OCI-LY7 (cell line): ENCODE measurements at regions of chr11 and their contacts with region 1.

Region 1: DNA sequence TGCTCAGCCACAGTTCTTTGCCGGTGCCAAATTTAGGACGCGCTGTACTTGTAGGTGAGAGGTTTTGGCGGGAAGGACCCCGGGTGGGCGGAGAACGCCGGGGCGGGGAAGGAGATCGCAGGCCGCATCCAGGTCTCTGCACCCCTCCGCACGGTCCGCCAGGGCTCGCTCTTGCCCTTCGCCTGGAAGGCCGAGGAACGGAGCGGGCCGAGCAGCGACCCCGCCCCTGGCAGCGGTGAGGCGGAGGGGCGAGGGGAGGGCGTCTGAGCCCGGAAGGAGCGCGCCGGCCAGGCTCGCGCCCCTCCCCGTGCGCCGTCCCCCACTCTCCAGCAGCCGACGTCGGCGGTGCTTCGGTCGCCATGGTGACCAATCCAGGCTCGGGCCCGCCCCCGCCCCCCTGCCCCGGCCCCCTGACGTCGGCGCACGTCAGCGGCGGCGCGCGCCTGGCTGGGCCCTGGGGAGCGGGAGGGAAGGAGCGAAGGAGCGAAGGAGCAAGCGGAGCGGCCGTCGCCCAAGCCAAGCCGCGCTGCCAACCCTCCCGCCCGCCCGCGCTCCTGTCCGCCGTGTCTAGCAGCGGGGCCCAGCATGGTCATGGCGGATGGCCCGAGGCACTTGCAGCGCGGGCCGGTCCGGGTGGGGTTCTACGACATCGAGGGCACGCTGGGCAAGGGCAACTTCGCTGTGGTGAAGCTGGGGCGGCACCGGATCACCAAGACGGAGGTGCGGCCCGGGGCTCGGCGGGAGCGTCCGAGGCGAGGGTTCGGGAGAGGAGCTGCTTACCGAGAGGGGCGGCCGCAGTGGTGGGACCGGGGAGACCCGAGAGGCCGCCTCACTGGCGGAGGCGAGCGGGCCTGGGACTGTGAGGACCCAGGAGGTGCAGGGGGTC is at the start of gene SIK2:
- DNase-seq: peak; percentile 97
- H3K4me3 ChIP-seq: peak within 1 kb of the TSS; percentile 96
- H3K27ac ChIP-seq: peak within 1 kb of the TSS; percentile 72
- H3K4me1 ChIP-seq: peaks cover 30% of the 10 kb centered on the region
- CTCF ChIP-seq: peak; percentile 80
- total RNA-seq, gene SIK2: 8.5 and 9.8 TPM in 2 replicates

Region 2: DNA sequence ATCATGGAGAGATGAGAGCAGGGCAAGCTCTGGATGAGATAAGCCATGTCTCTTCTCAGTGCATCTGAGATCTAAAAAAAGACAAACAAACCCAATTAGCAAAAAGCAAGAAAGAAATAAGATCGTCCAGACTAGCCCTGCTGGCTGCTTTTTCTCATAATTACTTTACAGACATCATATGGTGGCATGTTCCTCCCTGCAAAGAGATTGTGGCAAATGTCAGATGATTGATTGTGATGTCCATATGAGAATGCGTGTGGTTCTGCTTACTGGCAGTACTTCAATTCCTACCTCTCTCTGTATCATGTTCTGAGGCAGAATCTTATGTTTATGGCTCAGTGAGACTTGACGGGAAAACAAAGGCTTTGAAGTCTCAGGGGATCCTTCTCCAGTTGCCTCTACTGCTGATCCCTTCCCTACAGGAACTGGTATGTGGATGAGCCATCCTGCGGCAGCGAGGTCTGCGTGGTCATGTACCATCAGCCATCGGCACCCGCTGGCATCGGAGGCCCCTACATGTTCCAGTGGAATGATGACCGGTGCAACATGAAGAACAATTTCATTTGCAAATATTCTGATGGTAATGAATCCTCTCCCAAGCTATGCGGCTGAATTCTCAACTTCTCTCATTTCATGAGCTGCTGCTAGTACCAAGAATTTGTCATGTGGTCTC is 52.9 kb before region 1 on chr11:
- CTCF ChIA-PET with region 1: no interaction called
- POLR2A ChIA-PET with region 1: no interaction called
- intact Hi-C with region 1: no loop called
- DNase-seq: no peak
- H3K4me3 ChIP-seq: no peak overlapping the region
- H3K27ac ChIP-seq: no peak overlapping the region
- H3K4me1 ChIP-seq: peaks cover 11% of the 10 kb centered on the region
- CTCF ChIP-seq: no peak

Region 3: GRCh38 chr11:111565114-111565720 is 37.0 kb before region 1 on chr11:
- CTCF ChIA-PET with region 1: no interaction called
- POLR2A ChIA-PET with region 1: interaction called, 4 read pairs
- intact Hi-C with region 1: loop called (anchors 2 kb)
- DNase-seq: peak; percentile 83
- H3K4me3 ChIP-seq: no peak overlapping the region
- H3K27ac ChIP-seq: no peak overlapping the region
- H3K4me1 ChIP-seq: no peaks in the 10 kb centered on the region
- CTCF ChIP-seq: peak; percentile 93

Region 4: DNA sequence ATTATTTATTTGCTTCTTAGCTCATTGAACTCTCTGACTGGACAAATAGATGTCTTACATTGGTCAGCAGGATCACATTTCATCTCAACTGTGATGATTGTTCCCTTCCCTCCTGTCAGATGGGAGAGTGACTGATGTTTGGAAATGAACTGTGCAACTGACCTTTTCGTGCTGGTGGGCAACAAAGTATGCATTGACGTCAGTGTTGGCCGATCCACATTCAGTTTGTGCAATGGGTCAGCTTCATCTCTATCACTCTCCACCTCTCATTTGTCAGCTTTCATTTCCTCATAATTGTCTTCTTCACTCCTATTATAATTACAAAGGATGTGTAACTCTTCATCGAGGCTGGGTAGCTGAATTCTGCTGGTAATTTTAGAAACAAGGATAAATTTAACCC is 92.6 kb after region 1 on chr11:
- CTCF ChIA-PET with region 1: interaction called, 6 read pairs
- POLR2A ChIA-PET with region 1: interaction called, 6 read pairs
- intact Hi-C with region 1: loop called (anchors 2 kb)
- DNase-seq: peak; percentile 58
- H3K4me3 ChIP-seq: peak overlapping the region; percentile 33
- H3K27ac ChIP-seq: peak overlapping the region; percentile 94
- H3K4me1 ChIP-seq: peaks cover 68% of the 10 kb centered on the region
- CTCF ChIP-seq: no peak

Region 5: GRCh38 chr11:111766093-111766833 is 164.0 kb after region 1 on chr11 and contains the start of gene PPP2R1B:
- CTCF ChIA-PET with region 1: interaction called, 5 read pairs
- POLR2A ChIA-PET with region 1: interaction called, 7 read pairs
- intact Hi-C with region 1: loop called (anchors 1 kb)
- DNase-seq: peak; percentile 74
- H3K4me3 ChIP-seq: peak within 1 kb of the TSS; percentile 88
- H3K27ac ChIP-seq: peak within 1 kb of the TSS; percentile 35
- H3K4me1 ChIP-seq: peaks cover 17% of the 10 kb centered on the region
- CTCF ChIP-seq: no peak
- total RNA-seq, gene PPP2R1B: 30.2 and 50.6 TPM in 2 replicates

Region 6: GRCh38 chr11:111841370-111842053 is 239.3 kb after region 1 on chr11:
- CTCF ChIA-PET with region 1: no interaction called
- POLR2A ChIA-PET with region 1: interaction called, 4 read pairs
- intact Hi-C with region 1: loop called (anchors 1 kb)
- DNase-seq: peak; percentile 85
- H3K4me3 ChIP-seq: no peak overlapping the region
- H3K27ac ChIP-seq: no peak overlapping the region
- H3K4me1 ChIP-seq: no peaks in the 10 kb centered on the region
- CTCF ChIP-seq: peak; percentile 98

Region 7: DNA sequence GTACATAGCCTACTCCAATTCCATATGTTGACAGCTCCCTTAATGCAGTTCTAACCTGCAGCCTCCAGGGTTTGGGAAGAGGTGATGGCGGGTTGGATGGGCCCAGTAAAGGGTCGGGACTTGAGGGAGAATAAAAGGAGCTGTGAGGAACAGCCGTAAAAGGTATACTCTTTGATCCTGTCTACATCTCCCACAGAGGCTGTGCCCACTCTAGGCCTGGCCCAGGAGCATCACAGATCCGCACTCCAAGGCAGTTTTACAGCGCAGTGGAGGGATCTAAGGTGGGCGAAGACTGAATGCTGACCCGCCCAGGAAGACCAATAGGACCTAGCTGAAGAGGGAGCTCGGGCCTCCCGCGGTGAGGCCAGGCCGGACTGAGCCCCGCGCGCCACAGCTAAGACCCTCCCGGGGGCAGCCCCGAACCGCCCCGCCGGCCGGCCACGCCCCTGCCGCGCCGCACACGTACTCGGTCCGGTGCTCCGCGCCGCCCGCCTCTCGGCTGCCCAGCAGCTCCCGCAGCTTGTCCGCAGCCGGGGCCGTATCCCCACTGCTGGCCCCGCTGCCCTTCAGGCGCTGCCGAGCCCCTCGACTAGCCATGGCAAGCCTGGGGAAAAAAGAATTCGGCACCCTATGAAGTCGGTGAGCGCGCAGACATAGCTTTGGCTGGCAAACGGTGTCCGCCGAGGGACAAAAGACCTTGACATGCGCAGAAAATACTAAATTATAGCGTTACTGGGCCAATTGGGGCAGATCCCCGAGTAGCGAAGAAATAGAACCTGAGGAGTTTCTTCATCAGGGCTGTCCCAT is 268.9 kb after region 1 on chr11 and contains the start of gene ALG9:
- CTCF ChIA-PET with region 1: no interaction called
- POLR2A ChIA-PET with region 1: interaction called, 3 read pairs
- intact Hi-C with region 1: loop called (anchors 5 kb)
- DNase-seq: peak; percentile 79
- H3K4me3 ChIP-seq: peak within 1 kb of the TSS; percentile 79
- H3K27ac ChIP-seq: peak within 1 kb of the TSS; percentile 12
- H3K4me1 ChIP-seq: peaks cover 16% of the 10 kb centered on the region
- CTCF ChIP-seq: peak; percentile 43; the same call in 1 of the 2 replicates
- total RNA-seq, gene ALG9: 13.8 and 16.8 TPM in 2 replicates